Activated naive CD4-positive, alpha-beta T cell treated with anti-CD3 and anti-CD28 coated beads for 36 hours (primary cell): ENCODE measurements at regions of chr20 and their contacts with region 1.

Region 1: DNA sequence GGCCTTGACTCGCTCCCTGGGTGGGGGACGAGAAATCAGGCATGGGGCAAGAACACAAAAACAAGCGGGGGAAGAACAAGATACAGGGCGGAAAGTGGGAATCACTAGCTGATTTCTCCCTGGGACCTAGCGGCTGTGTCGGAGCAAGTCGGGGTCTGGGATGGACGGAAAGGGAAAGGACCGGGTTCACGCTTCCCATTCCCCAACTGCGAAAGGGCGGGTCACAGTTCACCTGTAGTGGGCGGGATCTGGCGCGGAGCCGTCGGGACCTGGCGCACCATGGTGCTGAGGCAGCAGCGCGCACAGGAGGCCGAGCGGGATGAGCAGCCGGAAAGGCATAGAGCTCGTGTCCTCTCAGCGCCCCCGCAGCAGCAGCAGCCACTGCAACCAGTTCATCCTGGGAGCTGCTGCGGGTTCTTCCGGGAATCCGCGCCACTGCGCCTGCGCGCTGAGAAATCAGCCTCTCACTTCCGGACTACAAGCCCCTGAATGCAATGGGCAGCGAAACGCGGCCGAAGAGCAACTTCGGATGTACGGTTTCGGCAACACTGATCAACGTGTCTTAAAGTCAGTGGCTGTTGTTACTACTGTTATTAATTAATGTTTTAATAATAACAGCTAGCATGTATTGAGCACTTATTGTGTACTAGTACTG is at the start of gene EDEM2:
- DNase-seq: peak; percentile 95
- H3K4me3 Mint-ChIP-seq: peak within 1 kb of the TSS; percentile 91
- H3K27ac Mint-ChIP-seq: peak within 1 kb of the TSS; percentile 86
- H3K4me1 Mint-ChIP-seq: peaks cover 23% of the 10 kb centered on the region
- H3K27me3 Mint-ChIP-seq: no peaks in the 10 kb centered on the region
- total RNA-seq, gene EDEM2: 15.5 to 15.8 TPM

Region 2: DNA sequence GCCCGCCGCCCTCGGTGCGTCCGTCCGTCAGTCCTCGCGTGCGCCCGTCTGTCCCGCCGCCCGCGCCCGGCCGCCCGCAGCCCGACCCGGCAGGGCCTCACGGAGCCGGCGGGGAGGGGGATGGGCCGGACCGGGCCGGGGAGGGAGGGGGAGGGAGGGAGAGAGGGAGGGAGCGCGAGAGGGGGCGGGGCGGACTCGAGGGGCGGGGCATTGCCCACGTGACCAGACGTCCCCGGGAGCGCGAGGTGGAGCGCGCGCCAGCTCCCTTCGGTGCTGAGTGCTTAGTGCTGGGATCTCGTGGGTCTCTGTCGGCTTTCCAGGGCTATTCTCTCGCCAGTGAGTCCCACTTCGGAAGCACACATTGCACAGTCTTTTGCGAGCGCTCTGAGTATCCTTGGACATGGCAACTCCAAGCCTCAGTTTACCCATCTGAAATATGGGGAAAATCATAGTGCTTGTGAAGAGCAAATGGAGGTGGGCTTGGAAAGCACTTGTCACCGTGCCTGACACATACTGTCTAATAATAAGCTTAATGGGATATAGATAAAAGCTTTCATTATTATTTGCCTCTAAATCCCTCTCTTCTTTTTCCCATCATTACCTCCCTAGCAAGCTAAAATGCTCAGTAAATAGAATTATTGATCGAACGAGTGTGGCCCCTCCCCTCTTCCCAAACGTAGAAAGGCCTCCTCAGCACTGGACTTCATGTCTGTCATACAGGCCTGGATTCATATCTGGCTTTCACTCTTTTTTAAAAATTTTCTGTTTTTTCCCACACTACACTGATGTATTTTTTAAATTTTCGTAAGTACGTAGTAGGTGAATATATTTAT is 321.3 kb before region 1 on chr20 and contains the start of gene NCOA6:
- CTCF ChIA-PET with region 1: no interaction called
- intact Hi-C with region 1: loop called (anchors 5 kb)
- DNase-seq: peak; percentile 88
- H3K4me3 Mint-ChIP-seq: peak within 1 kb of the TSS; percentile 97
- H3K27ac Mint-ChIP-seq: peak within 1 kb of the TSS; percentile 93
- H3K4me1 Mint-ChIP-seq: peaks cover 37% of the 10 kb centered on the region
- H3K27me3 Mint-ChIP-seq: no peaks in the 10 kb centered on the region
- total RNA-seq, gene NCOA6: 13.9 to 14.1 TPM

Region 3: GRCh38 chr20:35207950-35208611 is 61.0 kb after region 1 on chr20:
- CTCF ChIA-PET with region 1: interaction called, 19 read pairs
- intact Hi-C with region 1: loop called (anchors 1 kb)
- DNase-seq: peak; percentile 91
- H3K4me3 Mint-ChIP-seq: no peak overlapping the region
- H3K27ac Mint-ChIP-seq: no peak overlapping the region
- H3K4me1 Mint-ChIP-seq: no peaks in the 10 kb centered on the region
- H3K27me3 Mint-ChIP-seq: no peaks in the 10 kb centered on the region

Region 4: DNA sequence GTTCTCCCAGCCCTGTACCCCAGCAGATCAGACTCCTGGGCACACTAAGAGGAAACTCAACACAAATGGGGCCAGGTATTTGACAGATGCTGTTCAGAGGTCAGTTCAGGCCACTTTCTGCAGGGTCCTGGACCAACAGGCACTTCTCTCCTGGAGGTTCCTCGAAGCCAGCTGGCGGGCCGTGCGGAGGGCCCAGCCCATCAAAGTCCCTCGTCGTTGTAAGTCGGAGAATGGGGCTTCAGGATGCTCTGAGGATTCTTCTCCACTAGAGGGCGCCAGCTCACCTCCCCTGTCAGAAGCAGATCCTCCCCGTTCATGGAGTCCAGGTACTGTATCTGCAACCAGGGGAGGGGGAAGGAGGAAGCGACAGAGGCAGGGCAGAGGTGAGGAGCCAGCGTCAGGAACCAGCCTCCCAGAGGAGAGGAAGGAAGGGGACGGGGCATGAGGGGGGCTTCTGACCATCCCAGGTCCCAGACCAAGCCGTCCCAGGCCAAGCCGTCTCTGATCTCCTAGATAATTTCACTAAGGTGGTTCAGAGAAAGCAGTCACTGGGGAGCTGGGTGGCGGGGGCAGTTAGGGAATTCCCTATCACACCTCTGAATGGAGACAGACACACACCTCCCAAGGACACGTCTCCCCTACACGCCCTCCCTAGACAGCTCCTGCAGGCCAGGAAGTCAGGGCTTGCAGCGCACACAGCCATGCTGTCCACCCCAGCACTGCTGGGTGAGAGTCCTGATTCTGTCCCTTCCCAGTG is 156.9 kb after region 1 on chr20:
- CTCF ChIA-PET with region 1: interaction called, 5 read pairs
- intact Hi-C with region 1: loop called (anchors 10 kb)
- DNase-seq: peak; percentile 95
- H3K4me3 Mint-ChIP-seq: no peak overlapping the region
- H3K27ac Mint-ChIP-seq: peak overlapping the region; percentile 10
- H3K4me1 Mint-ChIP-seq: peaks cover 54% of the 10 kb centered on the region
- H3K27me3 Mint-ChIP-seq: no peaks in the 10 kb centered on the region

Region 5: DNA sequence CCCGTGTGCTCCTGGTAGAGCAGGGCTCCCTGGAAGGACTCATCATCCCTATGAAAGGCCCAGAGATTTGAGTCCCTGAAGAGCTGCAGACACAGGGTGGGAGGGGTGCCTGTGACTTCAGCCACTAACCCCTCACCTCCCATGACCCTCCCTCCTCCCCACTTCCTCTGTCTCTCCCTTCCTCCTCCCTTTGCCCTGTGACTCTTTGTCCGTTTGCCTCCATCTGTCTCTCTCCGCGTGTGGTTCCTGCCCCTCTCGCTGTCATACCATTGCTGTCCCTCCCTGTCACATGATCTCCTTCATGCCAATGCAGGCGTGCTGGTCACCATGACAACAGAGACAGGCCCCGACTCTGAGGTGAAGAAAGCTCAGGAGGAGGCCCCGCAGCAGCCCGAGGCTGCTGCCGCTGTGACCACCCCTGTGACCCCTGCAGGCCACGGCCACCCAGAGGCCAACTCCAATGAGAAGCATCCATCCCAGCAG is 1026.4 kb after region 1 on chr20:
- CTCF ChIA-PET with region 1: no interaction called
- intact Hi-C with region 1: no loop called
- DNase-seq: no peak
- H3K4me3 Mint-ChIP-seq: no peak overlapping the region
- H3K27ac Mint-ChIP-seq: no peak overlapping the region
- H3K4me1 Mint-ChIP-seq: peaks cover 3% of the 10 kb centered on the region
- H3K27me3 Mint-ChIP-seq: no peaks in the 10 kb centered on the region

Region 6: DNA sequence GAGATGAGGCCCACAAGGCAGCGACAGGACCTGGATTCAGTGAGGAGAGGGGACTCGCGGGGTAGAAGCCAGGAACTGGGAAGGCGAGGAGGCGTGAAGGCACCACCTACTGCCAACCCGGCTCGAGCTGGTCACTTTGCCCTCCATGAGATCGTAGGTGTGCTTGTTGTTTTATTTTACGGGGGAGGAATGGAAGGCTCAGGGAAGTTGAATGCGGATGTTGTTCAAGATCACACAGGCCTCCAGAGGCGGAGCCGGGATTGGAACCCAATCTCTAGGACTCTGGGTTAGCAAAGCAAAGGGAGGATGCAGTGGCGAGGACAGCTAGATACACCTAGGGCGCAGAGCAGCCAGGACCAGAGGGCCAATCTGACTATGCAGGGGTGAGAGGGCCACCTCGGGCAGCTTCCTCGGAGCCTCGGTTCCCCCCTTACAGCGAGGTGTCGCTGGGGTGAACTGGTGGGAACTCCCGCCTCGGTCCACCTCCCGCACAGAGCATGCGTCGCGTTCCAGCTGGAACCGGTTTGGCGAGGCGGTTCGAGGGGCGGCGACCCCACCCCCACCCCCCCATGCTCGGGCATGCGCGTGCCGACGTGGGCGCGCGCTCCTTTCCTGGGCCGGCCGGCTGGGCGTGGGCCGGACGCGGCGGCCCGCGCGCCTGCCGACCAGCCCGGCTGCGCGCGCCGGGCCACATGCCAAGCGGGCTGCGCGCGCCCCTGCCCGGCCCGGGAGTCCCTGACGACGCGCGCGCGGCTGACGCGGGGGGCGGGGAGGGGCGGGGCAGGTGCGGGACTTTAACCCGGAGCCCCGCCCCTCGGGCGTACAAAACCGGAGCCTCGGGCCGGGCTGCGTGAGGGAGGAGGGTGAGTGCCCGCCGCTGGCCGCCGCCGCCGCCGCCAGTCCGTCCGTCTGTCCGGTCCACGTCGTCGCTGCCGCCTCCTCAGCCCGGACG is 1313.9 kb after region 1 on chr20:
- CTCF ChIA-PET with region 1: no interaction called
- intact Hi-C with region 1: loop called (anchors 10 kb)
- DNase-seq: peak; percentile 89
- H3K4me3 Mint-ChIP-seq: peak overlapping the region; percentile 74
- H3K27ac Mint-ChIP-seq: peak overlapping the region; percentile 52
- H3K4me1 Mint-ChIP-seq: peaks cover 47% of the 10 kb centered on the region
- H3K27me3 Mint-ChIP-seq: no peaks in the 10 kb centered on the region